PC-9 (cell line): ENCODE measurements at regions of chr17 and their contacts with region 1.

Region 1: GRCh38 chr17:64694207-64694606 is 32.1 kb upstream of the SMURF2 start:
- DNase-seq: peak; percentile 84 to 95
- H3K4me3 ChIP-seq: no peak overlapping the region
- H3K27ac ChIP-seq: peak overlapping the region; percentile 67
- H3K4me1 ChIP-seq: peaks cover 26% of the 10 kb centered on the region
- H3K27me3 ChIP-seq: no peaks in the 10 kb centered on the region
- CTCF ChIP-seq: no peak

Region 2: DNA sequence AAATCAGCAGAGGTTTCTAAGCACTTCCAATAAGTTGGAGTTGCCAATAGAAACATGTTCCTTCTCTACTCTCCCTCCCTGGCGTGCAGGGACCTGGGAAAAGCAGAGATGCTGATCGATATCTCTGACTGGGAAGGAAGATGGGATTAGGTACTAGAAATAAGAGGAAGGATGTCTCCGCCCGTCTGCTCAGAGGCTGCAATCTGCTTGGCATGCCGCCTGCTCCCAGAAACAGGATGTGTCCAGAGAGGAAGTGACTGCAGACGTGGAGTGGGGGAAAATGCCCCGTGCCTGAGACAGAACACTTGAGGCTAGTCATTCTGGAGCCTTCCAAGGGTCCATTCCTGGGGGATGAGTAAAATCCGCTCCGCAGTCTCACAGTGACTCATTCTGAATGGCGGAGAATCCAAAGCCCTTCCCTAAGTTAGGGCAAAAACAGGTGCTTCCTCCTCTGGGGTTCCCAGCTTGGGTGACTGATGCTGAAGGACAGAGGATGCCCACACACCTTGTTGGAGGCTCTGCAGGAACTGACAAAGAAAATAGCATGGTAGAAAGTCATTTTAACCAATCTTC is 12.9 kb after region 1 on chr17:
- CTCF ChIA-PET with region 1: no interaction called
- POLR2A ChIA-PET with region 1: no interaction called
- intact Hi-C with region 1: loop called (anchors 1 kb)
- DNase-seq: peak; percentile 91 to 99
- H3K4me3 ChIP-seq: peak overlapping the region; percentile 13; the same call in 1 of the 2 replicates
- H3K27ac ChIP-seq: peak overlapping the region; percentile 84
- H3K4me1 ChIP-seq: peaks cover 53% of the 10 kb centered on the region
- H3K27me3 ChIP-seq: no peaks in the 10 kb centered on the region
- CTCF ChIP-seq: no peak